ENCODE measurements at regions of chr5 and their contacts with region 1.

Region 1: DNA sequence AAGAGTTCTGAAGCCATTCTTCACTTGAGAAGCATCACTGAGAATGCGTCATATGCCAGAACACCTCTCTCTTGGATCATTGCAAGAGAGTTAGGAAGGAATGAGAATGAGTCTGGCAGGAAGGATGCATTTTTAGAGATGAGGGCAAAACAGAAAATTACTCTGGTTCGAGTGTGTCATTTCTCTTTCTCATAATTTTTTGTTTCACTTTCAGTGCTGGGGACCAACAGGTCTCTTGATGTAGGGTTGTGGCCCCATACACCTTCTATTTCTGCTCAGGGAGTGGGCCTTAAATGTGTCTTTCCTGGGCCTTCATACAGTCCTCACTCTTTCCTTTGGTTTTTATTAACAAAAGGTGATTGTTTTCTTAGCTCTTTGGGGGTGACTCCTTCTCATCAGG is 302.4 kb downstream of the NR3C1 start:
- DNase-seq: peak; percentile 13
- H3K4me3 Mint-ChIP-seq: peak overlapping the region; percentile 48
- H3K27ac Mint-ChIP-seq: peak overlapping the region; percentile 92
- H3K4me1 Mint-ChIP-seq: peaks cover 53% of the 10 kb centered on the region
- H3K27me3 Mint-ChIP-seq: no peaks in the 10 kb centered on the region

Region 2: GRCh38 chr5:143008809-143009521 is 92.2 kb before region 1 on chr5:
- intact Hi-C with region 1: loop called (anchors 1 kb)
- DNase-seq: peak; percentile 82
- H3K4me3 Mint-ChIP-seq: peak overlapping the region; percentile 24
- H3K27ac Mint-ChIP-seq: peak overlapping the region; percentile 86
- H3K4me1 Mint-ChIP-seq: peaks cover 79% of the 10 kb centered on the region
- H3K27me3 Mint-ChIP-seq: no peaks in the 10 kb centered on the region

Region 3: GRCh38 chr5:143057580-143057999 is 43.5 kb before region 1 on chr5:
- intact Hi-C with region 1: loop called (anchors 1 kb)
- DNase-seq: no peak
- H3K4me3 Mint-ChIP-seq: no peak overlapping the region
- H3K27ac Mint-ChIP-seq: peak overlapping the region; percentile 97
- H3K4me1 Mint-ChIP-seq: peaks cover 77% of the 10 kb centered on the region
- H3K27me3 Mint-ChIP-seq: no peaks in the 10 kb centered on the region

Region 4: GRCh38 chr5:143182901-143183820 is 82.0 kb after region 1 on chr5:
- intact Hi-C with region 1: loop called (anchors 1 kb)
- DNase-seq: peak; percentile 68
- H3K4me3 Mint-ChIP-seq: peak overlapping the region; percentile 29
- H3K27ac Mint-ChIP-seq: peak overlapping the region; percentile 93
- H3K4me1 Mint-ChIP-seq: peaks cover 77% of the 10 kb centered on the region
- H3K27me3 Mint-ChIP-seq: no peaks in the 10 kb centered on the region

Region 5: GRCh38 chr5:143350751-143351603 is 249.9 kb after region 1 on chr5:
- intact Hi-C with region 1: loop called (anchors 2 kb)
- DNase-seq: no peak
- H3K4me3 Mint-ChIP-seq: no peak overlapping the region
- H3K27ac Mint-ChIP-seq: no peak overlapping the region
- H3K4me1 Mint-ChIP-seq: peaks cover 21% of the 10 kb centered on the region
- H3K27me3 Mint-ChIP-seq: no peaks in the 10 kb centered on the region

Region 6: GRCh38 chr5:143386725-143387124 is 285.6 kb after region 1 on chr5:
- intact Hi-C with region 1: no loop called
- DNase-seq: no peak
- H3K4me3 Mint-ChIP-seq: no peak overlapping the region
- H3K27ac Mint-ChIP-seq: peak overlapping the region; percentile 12
- H3K4me1 Mint-ChIP-seq: peaks cover 44% of the 10 kb centered on the region
- H3K27me3 Mint-ChIP-seq: no peaks in the 10 kb centered on the region

Region 7: DNA sequence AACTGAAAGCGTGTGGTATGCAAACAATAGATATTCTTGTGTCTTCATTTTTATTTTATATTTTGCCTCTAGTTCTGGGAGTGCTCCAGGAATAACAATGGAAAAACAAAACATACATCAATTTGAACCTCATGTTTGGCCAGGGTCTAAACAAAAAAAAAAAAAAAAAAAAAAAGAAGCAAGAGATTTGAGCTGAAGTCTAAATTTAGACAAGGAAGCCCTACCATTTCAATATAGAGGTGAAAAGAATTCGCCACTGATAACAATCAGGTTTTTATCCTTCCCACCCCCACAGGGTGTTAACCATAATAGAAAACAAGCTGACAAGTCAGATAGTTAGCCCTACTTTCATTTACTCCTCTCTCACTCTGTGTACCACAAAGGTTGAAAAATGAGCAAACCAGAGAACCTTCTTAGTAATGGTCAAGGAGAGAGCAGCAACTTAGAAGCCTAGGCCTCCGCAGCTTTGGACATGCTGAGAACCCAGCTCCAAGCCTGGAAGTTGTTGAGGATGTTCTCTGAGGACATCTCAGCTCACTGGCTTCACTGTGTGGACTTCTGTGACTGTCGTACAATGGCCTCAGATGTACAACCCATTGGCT is 592.6 kb after region 1 on chr5:
- intact Hi-C with region 1: loop called (anchors 1 kb)
- DNase-seq: no peak
- H3K4me3 Mint-ChIP-seq: no peak overlapping the region
- H3K27ac Mint-ChIP-seq: peak overlapping the region; percentile 58
- H3K4me1 Mint-ChIP-seq: peaks cover 44% of the 10 kb centered on the region
- H3K27me3 Mint-ChIP-seq: no peaks in the 10 kb centered on the region

Measured in activated T-helper 1 cell treated with anti-CD3 and anti-CD28 coated beads, Interleukin-12 subunit alpha, Interleukin-12 subunit beta, Interleukin-2, Interleukin-4 antibody, amounts not matched to agents 30 ng/mL and 10 ng/mL and 1 ng/mL, durations not matched to agents 14 hours and 24 hours and 36 hours (primary cell).